K562 (cell line): ENCODE measurements at regions of chr1 and their contacts with region 1.

Region 1: DNA sequence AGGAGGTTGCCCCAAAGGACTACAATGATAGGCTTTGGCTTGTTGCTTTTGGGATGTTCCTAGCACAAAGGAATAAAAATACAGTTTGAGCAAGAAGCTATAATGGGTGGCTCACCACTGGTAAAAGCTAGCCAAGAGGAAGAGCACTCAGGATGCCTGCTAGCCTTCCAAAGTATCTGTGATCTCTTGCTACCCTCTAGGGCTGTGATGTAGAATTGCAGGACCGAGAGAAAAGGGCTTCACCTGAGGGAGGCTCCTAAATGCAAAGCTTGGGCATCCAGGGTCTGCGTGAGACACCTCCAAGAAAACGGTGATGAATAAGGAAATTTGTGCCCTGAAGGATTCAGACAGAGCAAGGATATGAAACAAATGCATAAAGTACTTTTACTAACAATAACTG is 17.7 kb downstream of the IVL start:
- DNase-seq: peak in 1 of 4 experiments; percentile 15
- ATAC-seq: peak; percentile 55
- H3K4me3 ChIP-seq: no peak overlapping the region
- H3K27ac ChIP-seq: no peak overlapping the region
- H3K4me1 ChIP-seq: no peaks in the 10 kb centered on the region
- H3K27me3 ChIP-seq: peaks cover 2 to 5% of the 10 kb centered on the region in 2 experiments; a peak in 2 of 5 replicates
- CTCF ChIP-seq: peak in 2 of 3 experiments; percentile 31 to 45; a peak in 5 of 6 replicates
- EP300 ChIP-seq: no peak
- POLR2A ChIP-seq: no peak
- RAD21 ChIP-seq: peak in 1 of 2 experiments; percentile 37; a peak in 2 of 4 replicates

Region 2: GRCh38 chr1:152495066-152495675 is 430.9 kb before region 1 on chr1:
- CTCF ChIA-PET with region 1: no interaction called
- POLR2A ChIA-PET with region 1: no interaction called
- in situ Hi-C with region 1: no loop called
- intact Hi-C with region 1: loop called (anchors 5 kb)
- DNase-seq: peak; percentile 38 to 47 (median 44)
- ATAC-seq: peak; percentile 79
- H3K4me3 ChIP-seq: no peak overlapping the region
- H3K27ac ChIP-seq: no peak overlapping the region
- H3K4me1 ChIP-seq: no peaks in the 10 kb centered on the region
- H3K27me3 ChIP-seq: peaks cover 0 to 7% of the 10 kb centered on the region in 2 experiments; a peak in 1 of 5 replicates
- CTCF ChIP-seq: peak; percentile 61 to 65 (median 63)
- EP300 ChIP-seq: no peak
- POLR2A ChIP-seq: no peak
- RAD21 ChIP-seq: no peak

Region 3: GRCh38 chr1:152983743-152984142 is 57.7 kb after region 1 on chr1 and contains the start of gene SPRR1A:
- CTCF ChIA-PET with region 1: no interaction called
- POLR2A ChIA-PET with region 1: no interaction called
- in situ Hi-C with region 1: no loop called
- intact Hi-C with region 1: no loop called
- DNase-seq: no peak
- ATAC-seq: no peak
- H3K4me3 ChIP-seq: no peak within 1 kb of the TSS
- H3K27ac ChIP-seq: no peak within 1 kb of the TSS
- H3K4me1 ChIP-seq: no peaks in the 10 kb centered on the region
- H3K27me3 ChIP-seq: peaks cover 0 to 10% of the 10 kb centered on the region in 2 experiments; a peak in 3 of 5 replicates
- CTCF ChIP-seq: no peak
- EP300 ChIP-seq: no peak
- POLR2A ChIP-seq: no peak
- RAD21 ChIP-seq: no peak
- polyA plus RNA-seq, gene SPRR1A: not detected